ENCODE measurements at regions of chr20 and their contacts with region 1.

Region 1: GRCh38 chr20:24149881-24150307 is 161.3 kb upstream of the GGTLC1 start:
- DNase-seq: no peak
- ATAC-seq: peak; percentile 86
- H3K4me3 ChIP-seq: no peak overlapping the region
- H3K27ac ChIP-seq: no peak overlapping the region
- H3K4me1 ChIP-seq: no peaks in the 10 kb centered on the region
- H3K27me3 ChIP-seq: no peaks in the 10 kb centered on the region
- CTCF ChIP-seq: peak; percentile 77

Region 2: GRCh38 chr20:24079661-24080412 is 70.1 kb before region 1 on chr20:
- CTCF ChIA-PET with region 1: no interaction called
- POLR2A ChIA-PET with region 1: no interaction called
- in situ Hi-C with region 1: no loop called
- intact Hi-C with region 1: no loop called
- DNase-seq: no peak
- ATAC-seq: no peak
- H3K4me3 ChIP-seq: no peak overlapping the region
- H3K27ac ChIP-seq: no peak overlapping the region
- H3K4me1 ChIP-seq: no peaks in the 10 kb centered on the region
- H3K27me3 ChIP-seq: no peaks in the 10 kb centered on the region
- CTCF ChIP-seq: no peak

Region 3: DNA sequence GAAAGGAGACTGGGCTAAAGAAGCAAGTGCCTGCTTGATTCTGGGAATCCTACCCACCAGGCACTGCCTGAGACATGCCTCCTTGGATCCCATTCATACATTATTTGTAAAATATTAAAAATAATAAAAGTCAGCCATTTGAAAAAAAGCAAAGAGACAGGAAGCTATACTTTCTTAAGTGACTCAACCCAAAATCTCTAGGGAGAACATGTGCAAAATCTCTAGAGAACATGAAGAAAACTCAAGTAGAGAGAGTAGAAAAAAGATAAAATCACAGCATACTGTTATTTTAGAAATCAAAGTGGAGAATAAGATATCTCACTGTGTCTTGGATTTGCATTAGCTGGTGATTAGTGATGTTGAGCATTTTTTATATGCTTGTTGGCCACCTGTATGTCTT is 35.9 kb after region 1 on chr20:
- CTCF ChIA-PET with region 1: no interaction called
- POLR2A ChIA-PET with region 1: no interaction called
- in situ Hi-C with region 1: no loop called
- intact Hi-C with region 1: no loop called
- DNase-seq: no peak
- ATAC-seq: no peak
- H3K4me3 ChIP-seq: no peak overlapping the region
- H3K27ac ChIP-seq: no peak overlapping the region
- H3K4me1 ChIP-seq: no peaks in the 10 kb centered on the region
- H3K27me3 ChIP-seq: no peaks in the 10 kb centered on the region; the same call in 1 of the 2 replicates
- CTCF ChIP-seq: no peak

Region 4: GRCh38 chr20:24199501-24199900 is 49.6 kb after region 1 on chr20:
- CTCF ChIA-PET with region 1: no interaction called
- POLR2A ChIA-PET with region 1: no interaction called
- in situ Hi-C with region 1: no loop called
- intact Hi-C with region 1: loop called (anchors 5 kb)
- DNase-seq: no peak
- ATAC-seq: no peak
- H3K4me3 ChIP-seq: no peak overlapping the region
- H3K27ac ChIP-seq: no peak overlapping the region
- H3K4me1 ChIP-seq: no peaks in the 10 kb centered on the region
- H3K27me3 ChIP-seq: no peaks in the 10 kb centered on the region
- CTCF ChIP-seq: no peak